Adrenal gland (tissue), 19 donors: ENCODE measurements at regions of chr11 and their contacts with region 1.

Region 1: DNA sequence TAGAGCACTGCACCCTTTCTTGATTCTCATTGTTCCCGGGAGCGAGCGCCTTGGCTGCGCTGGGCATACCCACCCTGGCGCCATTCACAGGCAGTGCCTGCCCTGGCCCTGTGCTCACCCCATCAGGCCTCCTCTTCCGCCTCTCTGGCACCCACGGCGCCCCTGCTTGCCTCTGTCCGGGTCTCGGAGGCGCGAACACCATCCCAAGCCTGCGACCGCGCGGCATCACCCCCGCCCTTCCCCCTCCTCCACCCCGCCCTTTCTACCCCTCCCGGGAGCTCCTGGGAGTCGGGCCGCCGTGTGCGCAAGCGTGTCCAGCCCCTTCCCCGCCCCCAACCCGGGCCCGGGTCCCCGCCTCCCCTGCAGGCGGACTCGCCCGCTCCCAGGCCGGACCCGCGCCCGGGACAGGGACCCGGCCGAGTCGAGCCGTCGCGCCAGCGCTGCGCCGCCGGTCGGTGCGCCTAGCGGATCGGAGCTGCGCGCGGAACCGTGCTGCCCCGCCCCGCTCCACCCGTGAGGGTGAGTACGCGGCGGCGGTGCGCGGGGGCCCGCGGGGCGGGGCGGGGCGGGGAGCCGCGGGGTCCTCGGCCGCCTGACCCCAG is at the start of gene ST3GAL4:
- DNase-seq: peak; percentile 84 to 92 (median 89)
- H3K4me3 ChIP-seq: peak within 1 kb of the TSS; percentile 32 to 70 (median 50)
- H3K27ac ChIP-seq: peak within 1 kb of the TSS; percentile 55 to 96 (median 91)
- H3K4me1 ChIP-seq: peaks cover 68 to 77% of the 10 kb centered on the region in 2 donors
- H3K27me3 ChIP-seq: no peaks in the 10 kb centered on the region
- CTCF ChIP-seq: no peak
- POLR2A ChIP-seq: peak in 1 of 2 donors; percentile 68
- total RNA-seq, gene ST3GAL4: 119 to 359 (median 148) TPM

Region 2: GRCh38 chr11:126318574-126319373 is 36.7 kb before region 1 on chr11:
- intact Hi-C with region 1: loop called in 1 of 2 experiments (anchors 5 kb)
- DNase-seq: peak in 2 of 7 donors; percentile 8 to 49
- H3K4me3 ChIP-seq: no peak overlapping the region
- H3K27ac ChIP-seq: peak overlapping the region; percentile 66 to 91 (median 81)
- H3K4me1 ChIP-seq: peaks cover 13 to 41% of the 10 kb centered on the region in 2 donors
- H3K27me3 ChIP-seq: no peaks in the 10 kb centered on the region
- CTCF ChIP-seq: no peak
- POLR2A ChIP-seq: no peak

Region 3: GRCh38 chr11:126419801-126420697 is 64.6 kb after region 1 on chr11:
- intact Hi-C with region 1: loop called in 1 of 2 experiments (anchors 5 kb)
- DNase-seq: peak in 1 of 7 donors; percentile 80
- H3K4me3 ChIP-seq: no peak overlapping the region
- H3K27ac ChIP-seq: peak overlapping the region in 4 of 5 donors; percentile 29 to 80 (median 70)
- H3K4me1 ChIP-seq: peaks cover 43 to 77% of the 10 kb centered on the region in 2 donors
- H3K27me3 ChIP-seq: no peaks in the 10 kb centered on the region
- CTCF ChIP-seq: no peak
- POLR2A ChIP-seq: no peak